Panc1 (cell line): ENCODE measurements at regions of chr6 and their contacts with region 1.

Region 1: DNA sequence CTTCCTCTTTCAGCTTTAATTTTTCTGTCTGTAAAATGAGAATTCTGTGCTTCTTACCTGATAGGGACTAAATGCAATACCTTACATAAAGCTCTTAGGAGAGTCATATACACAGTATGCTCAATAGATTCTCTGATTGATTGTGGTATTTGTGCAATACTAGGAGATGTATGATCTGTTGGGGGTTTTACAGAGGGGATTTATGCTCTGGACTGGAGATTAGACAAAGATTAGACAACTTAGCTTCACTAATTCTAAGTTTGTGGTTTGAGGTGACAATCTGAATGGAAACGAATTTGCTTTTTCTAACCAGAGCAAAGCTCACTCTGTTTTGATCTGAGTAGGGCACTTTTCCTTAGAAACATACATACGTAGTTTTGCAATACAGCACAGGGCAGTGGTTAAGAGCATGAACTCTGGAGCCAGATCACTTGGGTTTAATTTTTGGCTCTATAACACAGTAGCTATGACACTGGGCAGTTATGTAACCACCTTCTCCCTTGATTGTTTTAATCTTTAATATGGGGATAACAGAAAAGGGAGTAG is 126.2 kb downstream of the RNF144B start:
- DNase-seq: no peak
- ATAC-seq: no peak
- H3K4me3 ChIP-seq: no peak overlapping the region
- H3K27ac ChIP-seq: no peak overlapping the region
- H3K4me1 ChIP-seq: no peaks in the 10 kb centered on the region
- H3K27me3 ChIP-seq: no peaks in the 10 kb centered on the region; the same call in 1 of the 2 replicates
- CTCF ChIP-seq: no peak

Region 2: DNA sequence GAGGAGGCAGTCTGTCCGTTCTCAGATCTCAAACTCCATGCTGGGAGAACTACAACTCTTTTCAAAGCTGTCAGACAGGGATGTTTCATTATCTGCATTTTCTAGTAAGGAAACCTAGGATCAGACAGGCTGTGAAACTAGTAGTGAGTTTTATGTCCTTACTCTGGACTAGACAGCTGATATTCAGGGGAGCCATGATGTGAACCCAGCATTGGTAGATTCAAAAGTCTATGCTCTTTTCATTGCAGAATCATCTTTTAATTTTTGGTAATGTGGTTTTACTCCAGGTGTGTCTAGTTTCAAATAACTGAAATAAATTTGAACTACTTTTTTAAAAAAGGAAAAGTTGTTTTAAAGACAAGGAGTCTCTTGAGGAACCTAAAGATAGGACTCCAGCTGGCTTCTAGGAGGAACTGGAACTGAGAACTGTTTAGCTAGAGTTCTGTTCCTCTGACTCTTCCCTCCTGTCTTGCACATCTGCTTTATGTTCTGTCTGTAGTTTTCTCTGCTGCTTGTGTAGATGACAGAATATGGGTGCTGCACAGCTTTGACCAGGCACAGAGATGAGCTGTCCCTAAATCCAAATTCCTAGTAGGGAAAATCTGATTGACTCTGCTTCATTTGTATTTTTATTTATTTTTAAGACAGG is 154.0 kb before region 1 on chr6:
- CTCF ChIA-PET with region 1: no interaction called
- POLR2A ChIA-PET with region 1: no interaction called
- in situ Hi-C with region 1: no loop called
- intact Hi-C with region 1: no loop called
- DNase-seq: no peak
- ATAC-seq: no peak
- H3K4me3 ChIP-seq: no peak overlapping the region
- H3K27ac ChIP-seq: no peak overlapping the region
- H3K4me1 ChIP-seq: no peaks in the 10 kb centered on the region
- H3K27me3 ChIP-seq: 0 out of 2 replicates have a peak, but pooled peaks cover 2% of the 10 kb centered on the region
- CTCF ChIP-seq: no peak

Region 3: GRCh38 chr6:18498408-18498807 is 14.9 kb before region 1 on chr6:
- CTCF ChIA-PET with region 1: no interaction called
- POLR2A ChIA-PET with region 1: interaction called, 17 read pairs
- in situ Hi-C with region 1: no loop called
- intact Hi-C with region 1: no loop called
- DNase-seq: no peak
- ATAC-seq: no peak
- H3K4me3 ChIP-seq: no peak overlapping the region
- H3K27ac ChIP-seq: no peak overlapping the region
- H3K4me1 ChIP-seq: no peaks in the 10 kb centered on the region; the same call in 1 of the 2 replicates
- H3K27me3 ChIP-seq: no peaks in the 10 kb centered on the region
- CTCF ChIP-seq: no peak